ENCODE measurements at regions of chr19 and their contacts with region 1.

Region 1: DNA sequence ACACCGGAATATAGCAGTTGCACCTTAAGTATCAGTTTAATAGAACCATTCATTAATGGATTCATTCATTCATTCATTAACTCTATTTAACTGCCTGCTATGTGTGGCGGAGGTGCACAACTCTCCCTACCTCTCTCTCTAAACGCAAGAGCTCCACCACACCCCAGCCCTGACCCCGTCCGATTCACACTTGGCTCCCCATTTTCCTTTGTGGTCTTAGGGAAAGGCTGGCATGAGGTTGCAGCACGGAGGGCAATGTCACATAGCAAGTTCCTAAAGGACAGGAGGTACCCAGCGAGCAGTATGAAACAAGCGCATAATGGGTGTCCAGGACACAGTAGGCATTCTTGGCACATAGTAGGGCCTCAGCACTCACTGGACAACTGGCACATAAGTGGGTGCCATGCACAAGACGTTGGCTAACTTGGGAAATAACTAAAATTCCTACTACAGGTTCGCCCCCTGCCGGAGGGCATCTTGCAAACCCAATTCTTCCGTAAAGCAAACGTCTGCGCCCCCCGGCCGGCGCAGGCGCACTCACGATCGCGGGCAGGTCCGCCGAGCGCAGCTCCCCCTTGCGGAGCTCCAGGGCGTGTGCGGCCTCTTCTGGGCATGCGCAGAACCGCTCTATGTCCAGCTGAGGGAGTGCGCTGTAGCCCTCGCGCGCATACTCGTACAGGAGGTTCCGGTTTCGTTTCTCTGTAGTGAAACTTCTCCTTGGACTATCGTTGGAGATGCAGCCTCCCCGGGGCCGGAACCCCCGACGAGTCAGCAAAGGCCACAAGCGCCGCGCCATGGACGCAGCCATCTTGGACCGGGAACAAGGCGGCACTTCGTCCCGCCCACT is at the start of gene SARS2:
- DNase-seq: peak; percentile 95
- ATAC-seq: peak; percentile 69
- H3K4me3 Mint-ChIP-seq: peak within 1 kb of the TSS; percentile 86
- H3K27ac Mint-ChIP-seq: peak within 1 kb of the TSS; percentile 99
- H3K4me1 Mint-ChIP-seq: peaks cover 53% of the 10 kb centered on the region
- H3K27me3 Mint-ChIP-seq: no peaks in the 10 kb centered on the region
- total RNA-seq, gene SARS2: 45.7 to 46.4 TPM

Region 2: DNA sequence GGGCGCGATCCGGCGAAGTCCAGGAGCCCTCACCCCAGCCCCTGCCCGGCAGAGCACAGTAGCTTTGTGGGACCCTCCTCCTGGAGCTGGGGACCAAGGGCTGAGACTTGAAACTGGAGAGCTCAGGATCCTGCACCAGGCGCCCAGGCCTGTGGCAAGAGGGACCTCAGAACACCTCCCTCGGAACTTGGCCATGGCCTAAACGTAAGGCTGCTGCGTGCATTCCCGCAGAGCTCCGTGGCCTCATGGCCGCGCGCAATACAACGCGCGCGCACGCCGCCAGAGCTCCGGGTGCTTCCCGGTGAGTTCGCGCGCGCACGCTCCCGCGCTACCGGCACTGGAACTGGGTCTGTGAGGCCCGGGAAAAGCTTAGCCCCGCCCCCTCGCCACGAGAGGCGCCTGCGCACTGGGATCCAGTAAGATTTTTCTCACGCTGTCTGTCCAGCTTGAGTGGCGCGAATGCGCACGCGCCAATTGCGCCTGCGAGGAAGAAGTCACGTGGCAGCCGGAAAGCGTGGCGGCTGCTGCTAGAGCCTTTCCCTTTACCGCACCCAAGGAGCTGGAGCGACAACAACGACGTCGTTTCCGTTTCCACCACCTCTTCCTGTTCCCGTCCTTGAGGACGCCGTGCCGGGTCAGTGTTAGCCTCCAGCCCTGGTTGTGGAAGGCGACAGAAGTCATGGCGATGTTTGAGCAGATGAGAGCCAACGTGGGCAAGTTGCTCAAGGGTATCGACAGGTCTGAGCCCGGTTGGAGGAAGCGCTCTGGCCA is 311.4 kb before region 1 on chr19 and contains the start of gene EIF3K:
- CTCF ChIA-PET with region 1: interaction called, 14 read pairs
- DNase-seq: peak; percentile 99
- ATAC-seq: peak; percentile 74
- H3K4me3 Mint-ChIP-seq: peak within 1 kb of the TSS; percentile 96
- H3K27ac Mint-ChIP-seq: peak within 1 kb of the TSS; percentile 89
- H3K4me1 Mint-ChIP-seq: peaks cover 48% of the 10 kb centered on the region
- H3K27me3 Mint-ChIP-seq: no peaks in the 10 kb centered on the region
- total RNA-seq, gene EIF3K: 281 to 308 TPM

Region 3: GRCh38 chr19:38736036-38736412 is 194.1 kb before region 1 on chr19:
- CTCF ChIA-PET with region 1: interaction called, 33 read pairs
- DNase-seq: peak; percentile 77
- ATAC-seq: peak; percentile 57
- H3K4me3 Mint-ChIP-seq: peak overlapping the region; percentile 61
- H3K27ac Mint-ChIP-seq: peak overlapping the region; percentile 46
- H3K4me1 Mint-ChIP-seq: peaks cover 55% of the 10 kb centered on the region
- H3K27me3 Mint-ChIP-seq: peaks cover 4% of the 10 kb centered on the region

Region 4: DNA sequence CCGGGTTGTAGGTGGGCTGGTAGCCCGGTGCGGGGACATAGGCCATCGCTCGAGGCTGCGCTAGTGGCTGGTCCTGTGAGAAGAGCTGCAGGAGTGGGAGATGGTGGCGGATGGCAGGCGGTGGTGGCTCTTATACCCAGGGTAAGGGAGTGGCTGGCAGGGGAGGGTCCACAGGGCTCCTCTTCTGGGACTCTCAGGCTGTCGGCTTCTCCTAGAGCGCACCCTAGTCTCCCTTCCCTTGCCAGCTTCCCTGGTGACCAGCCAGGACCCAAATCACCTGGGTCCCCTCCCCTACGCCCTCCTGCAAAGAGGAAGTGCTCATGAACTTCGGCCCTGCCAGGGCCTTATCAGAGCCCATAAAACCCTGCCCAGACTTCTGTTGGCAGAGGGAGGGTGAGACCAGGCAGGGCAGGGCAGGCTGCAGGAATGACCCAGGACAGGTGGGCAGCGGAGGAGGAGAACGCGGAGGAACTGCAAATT is 117.3 kb before region 1 on chr19 and contains the start of gene LGALS4:
- CTCF ChIA-PET with region 1: no interaction called
- DNase-seq: no peak
- ATAC-seq: no peak
- H3K4me3 Mint-ChIP-seq: no peak within 1 kb of the TSS
- H3K27ac Mint-ChIP-seq: no peak within 1 kb of the TSS
- H3K4me1 Mint-ChIP-seq: no peaks in the 10 kb centered on the region
- H3K27me3 Mint-ChIP-seq: no peaks in the 10 kb centered on the region
- total RNA-seq, gene LGALS4: 1.4 to 2.4 TPM

Region 5: GRCh38 chr19:38877781-38878574 is 52.2 kb before region 1 on chr19 and contains the start of gene RINL:
- CTCF ChIA-PET with region 1: interaction called, 28 read pairs
- DNase-seq: peak; percentile 85
- ATAC-seq: peak; percentile 93
- H3K4me3 Mint-ChIP-seq: peak within 1 kb of the TSS; percentile 91
- H3K27ac Mint-ChIP-seq: peak within 1 kb of the TSS; percentile 98
- H3K4me1 Mint-ChIP-seq: peaks cover 35% of the 10 kb centered on the region
- H3K27me3 Mint-ChIP-seq: no peaks in the 10 kb centered on the region
- total RNA-seq, gene RINL: 80.1 to 81.0 TPM

Region 6: GRCh38 chr19:38899447-38900219 is 30.5 kb before region 1 on chr19 and contains the starts of genes NFKBIB and SIRT2:
- CTCF ChIA-PET with region 1: interaction called, 34 read pairs
- DNase-seq: peak; percentile 100
- ATAC-seq: peak; percentile 92
- H3K4me3 Mint-ChIP-seq: peak within 1 kb of the TSS; percentile 97
- H3K27ac Mint-ChIP-seq: peak within 1 kb of the TSS; percentile 92
- H3K4me1 Mint-ChIP-seq: peaks cover 40% of the 10 kb centered on the region
- H3K27me3 Mint-ChIP-seq: no peaks in the 10 kb centered on the region
- total RNA-seq, gene NFKBIB: 44.7 to 65.7 TPM
- total RNA-seq, gene SIRT2: 47.1 to 47.8 TPM

Region 7: DNA sequence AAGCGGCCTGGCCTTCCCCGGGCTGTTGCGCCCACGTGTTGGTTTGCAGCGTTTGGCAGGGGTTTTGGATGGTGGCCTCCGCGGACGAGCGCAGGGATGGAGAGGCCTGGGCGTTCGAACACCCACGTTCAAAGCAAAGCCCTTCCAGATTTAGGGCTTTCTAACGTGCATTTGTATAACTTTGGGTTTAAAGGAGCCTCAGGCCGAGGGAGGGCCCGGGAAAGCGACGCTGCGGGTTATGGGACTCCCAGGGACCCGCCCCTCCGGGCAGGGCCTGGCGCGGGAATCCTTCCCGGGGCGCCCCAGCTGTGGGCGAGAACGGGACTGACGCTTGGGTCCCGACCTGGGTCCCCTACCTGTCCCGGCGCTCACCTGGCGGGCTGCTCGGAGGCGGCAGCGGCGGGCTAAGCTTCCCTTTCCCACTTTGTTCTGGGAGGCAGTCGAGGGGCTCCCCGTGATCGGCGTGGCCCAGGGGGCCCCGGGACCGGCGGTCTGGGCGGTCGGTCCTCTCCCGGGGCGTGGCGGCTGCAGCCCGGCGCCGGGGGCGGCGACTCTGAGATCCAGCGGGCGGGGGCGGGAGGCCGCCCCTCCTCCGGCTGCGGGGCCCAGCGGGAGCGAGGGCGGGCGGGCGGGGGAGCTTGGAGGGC is 45.2 kb after region 1 on chr19 and contains the start of gene FBXO17:
- CTCF ChIA-PET with region 1: no interaction called
- DNase-seq: no peak
- ATAC-seq: no peak
- H3K4me3 Mint-ChIP-seq: no peak within 1 kb of the TSS
- H3K27ac Mint-ChIP-seq: no peak within 1 kb of the TSS
- H3K4me1 Mint-ChIP-seq: peaks cover 24% of the 10 kb centered on the region
- H3K27me3 Mint-ChIP-seq: peaks cover 23% of the 10 kb centered on the region
- total RNA-seq, gene FBXO17: 0.12 TPM in 1 of 2 experiments, not detected in the other

Region 8: DNA sequence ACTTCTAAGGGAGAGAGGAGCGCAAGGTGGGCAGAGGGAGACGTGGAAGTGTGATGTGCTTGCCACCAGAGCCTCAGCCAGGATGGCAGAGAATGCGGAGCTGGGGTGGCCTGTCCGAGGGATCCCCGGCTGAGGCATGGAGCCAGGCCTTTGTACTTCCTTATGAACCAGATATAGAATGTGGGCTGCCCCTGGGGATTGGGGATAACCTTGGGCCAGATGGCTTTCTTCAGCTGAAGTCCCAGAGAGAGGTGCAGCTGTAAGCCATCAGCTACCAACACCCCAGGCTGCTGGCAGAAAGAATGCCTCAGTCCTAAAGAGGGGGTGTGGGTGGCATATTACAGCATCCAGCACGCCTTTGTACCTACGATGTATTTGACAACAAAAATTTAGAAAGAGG is 70.9 kb after region 1 on chr19:
- CTCF ChIA-PET with region 1: no interaction called
- DNase-seq: no peak
- ATAC-seq: no peak
- H3K4me3 Mint-ChIP-seq: no peak overlapping the region
- H3K27ac Mint-ChIP-seq: no peak overlapping the region
- H3K4me1 Mint-ChIP-seq: peaks cover 8% of the 10 kb centered on the region
- H3K27me3 Mint-ChIP-seq: peaks cover 39% of the 10 kb centered on the region

Region 9: GRCh38 chr19:39031368-39032062 is 101.4 kb after region 1 on chr19:
- CTCF ChIA-PET with region 1: no interaction called
- DNase-seq: peak; percentile 81
- ATAC-seq: peak; percentile 95
- H3K4me3 Mint-ChIP-seq: peak overlapping the region; percentile 57
- H3K27ac Mint-ChIP-seq: no peak overlapping the region
- H3K4me1 Mint-ChIP-seq: peaks cover 8% of the 10 kb centered on the region
- H3K27me3 Mint-ChIP-seq: peaks cover 49% of the 10 kb centered on the region

Measured in activated CD8-positive, alpha-beta memory T cell treated with anti-CD3 and anti-CD28 coated beads, Interleukin-2, amount 10 ng/mL, durations not matched to agents 7 days and 5 days (primary cell).